ENCODE measurements at regions of chr12 and their contacts with region 1.

Region 1: GRCh38 chr12:78403136-78403535 is 461.4 kb upstream of the SYT1 start:
- DNase-seq: peak; percentile 47
- ATAC-seq: peak; percentile 59; the same call in 1 of the 2 replicates
- H3K4me3 ChIP-seq: no peak overlapping the region
- H3K27ac ChIP-seq: no peak overlapping the region
- H3K4me1 ChIP-seq: no peaks in the 10 kb centered on the region; the same call in 1 of the 2 replicates
- H3K27me3 ChIP-seq: no peaks in the 10 kb centered on the region; the same call in 1 of the 2 replicates
- CTCF ChIP-seq: no peak
- POLR2A ChIP-seq: no peak
- RAD21 ChIP-seq: no peak

Region 2: GRCh38 chr12:78530100-78530765 is 127.1 kb after region 1 on chr12:
- CTCF ChIA-PET with region 1: no interaction called
- POLR2A ChIA-PET with region 1: no interaction called
- dilution Hi-C with region 1: no loop called
- in situ Hi-C with region 1: no loop called
- intact Hi-C with region 1: loop called (anchors 5 kb)
- DNase-seq: peak; percentile 38
- ATAC-seq: peak; percentile 95
- H3K4me3 ChIP-seq: no peak overlapping the region
- H3K27ac ChIP-seq: no peak overlapping the region
- H3K4me1 ChIP-seq: no peaks in the 10 kb centered on the region
- H3K27me3 ChIP-seq: no peaks in the 10 kb centered on the region
- CTCF ChIP-seq: no peak
- POLR2A ChIP-seq: no peak
- RAD21 ChIP-seq: no peak